ENCODE measurements at regions of chr20 and their contacts with region 1.

Region 1: GRCh38 chr20:35664544-35665221 is at the starts of genes CPNE1 and RBM12:
- DNase-seq: peak; percentile 84 to 95
- H3K4me3 ChIP-seq: peak within 1 kb of the TSS; percentile 92 to 100 (median 98)
- H3K27ac ChIP-seq: peak within 1 kb of the TSS; percentile 97
- H3K4me1 ChIP-seq: peaks cover 0 to 7% (median 0%) of the 10 kb centered on the region in 4 experiments; a peak in 3 of 7 replicates
- H3K27me3 ChIP-seq: no peaks in the 10 kb centered on the region
- CTCF ChIP-seq: no peak
- EP300 ChIP-seq: peak in 1 of 2 experiments; percentile 22; a peak in 1 of 3 replicates
- POLR2A ChIP-seq: peak; percentile 95 to 96
- RAD21 ChIP-seq: no peak
- total RNA-seq, gene CPNE1: 294 and 299 TPM in 2 replicates
- total RNA-seq, gene RBM12: 175 and 187 TPM in 2 replicates

Region 2: GRCh38 chr20:35641743-35642142 is 22.9 kb before region 1 on chr20:
- CTCF ChIA-PET with region 1: interaction called, 3 read pairs
- POLR2A ChIA-PET with region 1: interaction called, 49 read pairs
- DNase-seq: no peak
- H3K4me3 ChIP-seq: no peak overlapping the region
- H3K27ac ChIP-seq: no peak overlapping the region
- H3K4me1 ChIP-seq: peaks cover 0 to 9% (median 2%) of the 10 kb centered on the region in 4 experiments; a peak in 4 of 7 replicates
- H3K27me3 ChIP-seq: no peaks in the 10 kb centered on the region
- CTCF ChIP-seq: no peak
- EP300 ChIP-seq: no peak
- POLR2A ChIP-seq: no peak
- RAD21 ChIP-seq: no peak

Region 3: DNA sequence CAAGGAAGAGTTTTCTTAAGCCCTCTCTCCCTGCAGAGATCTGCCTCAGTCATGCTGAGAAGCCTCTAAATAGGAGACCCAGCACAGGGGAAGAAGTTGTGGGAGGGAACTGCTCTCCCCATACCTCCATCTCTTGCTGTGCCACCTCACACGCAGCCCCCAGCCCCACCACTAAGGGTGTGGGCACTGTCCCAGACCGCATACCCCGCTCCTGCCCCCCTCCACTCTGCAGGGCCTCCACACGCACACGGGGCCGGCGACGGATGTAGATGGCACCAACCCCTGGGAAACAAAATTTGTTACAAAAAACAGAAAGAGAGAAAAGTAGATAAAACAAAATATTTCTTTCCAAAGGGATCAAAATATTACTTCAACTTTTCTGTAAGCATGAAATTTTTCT is 10.2 kb after region 1 on chr20:
- CTCF ChIA-PET with region 1: interaction called, 4 read pairs
- POLR2A ChIA-PET with region 1: interaction called, 15 read pairs
- DNase-seq: no peak
- H3K4me3 ChIP-seq: no peak overlapping the region
- H3K27ac ChIP-seq: no peak overlapping the region
- H3K4me1 ChIP-seq: no peaks in the 10 kb centered on the region
- H3K27me3 ChIP-seq: no peaks in the 10 kb centered on the region
- CTCF ChIP-seq: no peak
- EP300 ChIP-seq: no peak
- POLR2A ChIP-seq: no peak
- RAD21 ChIP-seq: no peak

Region 4: DNA sequence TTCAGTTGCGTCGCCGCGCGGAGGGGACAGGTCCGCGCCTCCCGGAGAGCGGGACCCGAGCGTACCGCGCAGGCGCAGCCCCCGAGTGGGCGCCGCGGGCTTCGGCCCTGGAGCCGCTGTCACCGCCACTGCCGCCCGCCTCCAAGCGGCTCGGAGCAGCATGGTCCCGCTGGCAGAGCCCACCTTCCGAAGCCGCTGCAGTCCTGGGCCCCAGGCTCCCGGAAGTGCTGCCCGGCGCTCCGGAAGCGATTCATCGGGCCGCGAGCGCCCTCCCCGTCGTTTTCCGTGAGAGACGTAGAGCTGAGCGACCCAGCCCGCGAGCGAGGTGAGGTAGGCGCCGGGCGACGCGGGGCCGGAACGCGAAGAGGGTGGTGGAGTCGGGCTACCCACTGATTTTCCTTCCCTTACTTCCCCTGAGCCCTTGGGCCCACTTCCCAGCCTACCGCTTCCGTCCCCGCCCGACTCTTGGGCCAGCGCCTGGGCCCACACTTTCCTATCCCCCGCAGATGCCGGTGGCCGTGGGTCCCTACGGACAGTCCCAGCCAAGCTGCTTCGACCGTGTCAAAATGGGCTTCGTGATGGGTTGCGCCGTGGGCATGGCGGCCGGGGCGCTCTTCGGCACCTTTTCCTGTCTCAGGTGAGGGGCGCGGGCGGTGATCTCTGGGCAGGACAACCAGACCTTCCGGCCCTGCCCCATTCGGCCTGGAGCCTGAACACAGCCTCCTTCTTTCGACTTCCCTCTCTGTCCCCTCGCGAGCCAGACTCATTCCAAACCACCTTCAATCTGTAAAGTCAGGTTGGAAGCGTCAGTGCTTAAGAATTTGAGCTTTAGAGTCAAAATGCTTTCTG is 34.7 kb after region 1 on chr20 and contains the starts of genes NFS1 and ROMO1:
- CTCF ChIA-PET with region 1: no interaction called
- POLR2A ChIA-PET with region 1: interaction called, 19 read pairs
- DNase-seq: peak; percentile 65 to 90
- H3K4me3 ChIP-seq: peak within 1 kb of the TSS; percentile 66 to 99 (median 88)
- H3K27ac ChIP-seq: peak within 1 kb of the TSS; percentile 78
- H3K4me1 ChIP-seq: peaks cover 0 to 2% (median under 1%) of the 10 kb centered on the region in 4 experiments; a peak in 3 of 7 replicates
- H3K27me3 ChIP-seq: no peaks in the 10 kb centered on the region
- CTCF ChIP-seq: peak in 2 of 3 experiments; percentile 32 to 39; a peak in 2 of 4 replicates
- EP300 ChIP-seq: peak in 1 of 2 experiments; percentile 16; a peak in 1 of 3 replicates
- POLR2A ChIP-seq: peak; percentile 83 to 93
- RAD21 ChIP-seq: peak; percentile 7 to 31; a peak in 1 of 4 replicates
- total RNA-seq, gene NFS1: 25.1 and 26.1 TPM in 2 replicates
- total RNA-seq, gene ROMO1: 164 and 173 TPM in 2 replicates